MCF 10A (cell line): ENCODE measurements at regions of chr3 and their contacts with region 1.

Region 1: GRCh38 chr3:22117751-22118346 is 366.8 kb upstream of the ZNF385D start:
- DNase-seq: peak; percentile 56
- H3K4me3 Mint-ChIP-seq: no peak overlapping the region
- H3K27ac Mint-ChIP-seq: no peak overlapping the region
- H3K4me1 Mint-ChIP-seq: peaks cover 17% of the 10 kb centered on the region
- H3K27me3 Mint-ChIP-seq: no peaks in the 10 kb centered on the region
- CTCF ChIP-seq: peak; percentile 51

Region 2: DNA sequence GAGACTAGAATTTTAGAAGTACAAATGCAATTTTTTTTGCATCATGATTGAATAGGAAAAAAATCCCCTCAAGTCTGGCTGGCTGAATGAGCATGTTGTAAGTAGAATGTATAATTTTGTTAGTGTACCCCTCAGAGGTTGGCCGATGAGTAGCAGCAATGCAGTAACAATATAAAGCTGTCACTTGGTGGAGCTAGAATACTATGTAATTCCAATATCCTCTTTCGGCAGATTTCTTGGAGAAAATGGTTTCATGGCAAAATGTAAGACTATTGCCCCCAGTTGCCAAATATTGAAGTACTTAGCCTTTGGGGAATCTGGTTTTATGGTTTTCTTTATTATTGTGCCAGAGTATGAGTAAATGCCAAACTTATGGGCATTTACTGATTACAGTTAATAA is 1892.1 kb before region 1 on chr3:
- CTCF ChIA-PET with region 1: no interaction called
- POLR2A ChIA-PET with region 1: no interaction called
- intact Hi-C with region 1: loop called (anchors 10 kb)
- DNase-seq: peak; percentile 39
- H3K4me3 Mint-ChIP-seq: no peak overlapping the region
- H3K27ac Mint-ChIP-seq: no peak overlapping the region
- H3K4me1 Mint-ChIP-seq: no peaks in the 10 kb centered on the region
- H3K27me3 Mint-ChIP-seq: no peaks in the 10 kb centered on the region
- CTCF ChIP-seq: peak; percentile 37

Region 3: DNA sequence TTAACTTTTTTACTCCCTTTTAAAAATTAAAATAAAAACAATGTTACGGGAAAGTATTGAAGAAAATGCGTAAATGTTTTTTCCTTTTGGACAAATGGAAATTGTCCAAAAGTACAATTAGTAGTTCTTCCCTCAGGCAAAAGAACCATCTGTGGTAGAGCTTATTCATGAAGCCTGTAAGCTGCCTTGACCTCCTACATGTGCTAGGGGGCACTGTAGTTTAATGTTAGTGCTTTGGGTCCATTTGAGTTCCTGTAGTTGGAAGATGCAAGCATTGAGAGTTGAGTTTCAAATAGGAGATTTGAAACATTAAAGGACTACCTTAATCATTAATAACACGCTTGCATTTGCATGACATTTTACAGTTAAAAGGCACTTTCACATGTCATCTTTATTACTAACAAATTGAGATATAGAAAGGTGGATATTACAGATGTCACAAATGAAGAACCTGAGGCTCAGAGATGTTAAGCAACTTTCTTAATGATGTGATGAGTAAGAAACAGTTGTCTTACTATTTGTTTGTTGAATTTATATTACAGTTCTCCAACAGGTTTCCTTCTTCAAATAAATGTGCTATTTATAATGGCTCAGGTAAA is 365.0 kb before region 1 on chr3:
- CTCF ChIA-PET with region 1: interaction called, 3 read pairs
- POLR2A ChIA-PET with region 1: no interaction called
- intact Hi-C with region 1: loop called (anchors 1 kb)
- DNase-seq: peak; percentile 74
- H3K4me3 Mint-ChIP-seq: no peak overlapping the region
- H3K27ac Mint-ChIP-seq: no peak overlapping the region
- H3K4me1 Mint-ChIP-seq: peaks cover 15% of the 10 kb centered on the region
- H3K27me3 Mint-ChIP-seq: no peaks in the 10 kb centered on the region
- CTCF ChIP-seq: peak; percentile 61

Region 4: DNA sequence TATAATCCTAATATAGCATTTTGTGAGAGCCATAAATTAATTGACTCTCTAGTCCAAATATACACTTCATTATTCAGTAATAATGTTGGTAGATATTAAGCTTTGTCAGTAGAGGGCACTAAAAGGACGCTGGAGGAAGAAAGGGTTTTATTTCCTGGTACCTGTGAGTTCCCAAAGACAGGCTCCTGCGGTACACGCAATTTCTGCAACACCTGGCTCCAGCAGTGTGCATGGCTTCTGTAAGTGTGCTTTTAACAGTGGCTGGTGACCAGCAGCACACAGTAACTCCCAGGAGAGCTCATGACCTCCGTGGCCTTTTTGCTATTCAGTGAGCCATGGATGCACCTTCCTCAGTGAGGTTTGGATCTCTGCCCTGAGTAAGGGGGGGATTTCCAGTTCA is 28.6 kb before region 1 on chr3:
- CTCF ChIA-PET with region 1: interaction called, 33 read pairs
- POLR2A ChIA-PET with region 1: interaction called, 3 read pairs
- intact Hi-C with region 1: loop called (anchors 1 kb)
- DNase-seq: peak; percentile 63
- H3K4me3 Mint-ChIP-seq: no peak overlapping the region
- H3K27ac Mint-ChIP-seq: no peak overlapping the region
- H3K4me1 Mint-ChIP-seq: no peaks in the 10 kb centered on the region
- H3K27me3 Mint-ChIP-seq: no peaks in the 10 kb centered on the region
- CTCF ChIP-seq: peak; percentile 60